ENCODE measurements at regions of chr2 and their contacts with region 1.

Region 1: GRCh38 chr2:190328573-190329147 is 9.0 kb upstream of the HIBCH start:
- DNase-seq: peak; percentile 40
- H3K4me3 ChIP-seq: no peak overlapping the region
- H3K27ac ChIP-seq: no peak overlapping the region
- H3K4me1 ChIP-seq: peaks cover 8% of the 10 kb centered on the region
- H3K27me3 ChIP-seq: no peaks in the 10 kb centered on the region
- CTCF ChIP-seq: peak in 1 of 2 donors; percentile 7
- POLR2A ChIP-seq: no peak

Region 2: DNA sequence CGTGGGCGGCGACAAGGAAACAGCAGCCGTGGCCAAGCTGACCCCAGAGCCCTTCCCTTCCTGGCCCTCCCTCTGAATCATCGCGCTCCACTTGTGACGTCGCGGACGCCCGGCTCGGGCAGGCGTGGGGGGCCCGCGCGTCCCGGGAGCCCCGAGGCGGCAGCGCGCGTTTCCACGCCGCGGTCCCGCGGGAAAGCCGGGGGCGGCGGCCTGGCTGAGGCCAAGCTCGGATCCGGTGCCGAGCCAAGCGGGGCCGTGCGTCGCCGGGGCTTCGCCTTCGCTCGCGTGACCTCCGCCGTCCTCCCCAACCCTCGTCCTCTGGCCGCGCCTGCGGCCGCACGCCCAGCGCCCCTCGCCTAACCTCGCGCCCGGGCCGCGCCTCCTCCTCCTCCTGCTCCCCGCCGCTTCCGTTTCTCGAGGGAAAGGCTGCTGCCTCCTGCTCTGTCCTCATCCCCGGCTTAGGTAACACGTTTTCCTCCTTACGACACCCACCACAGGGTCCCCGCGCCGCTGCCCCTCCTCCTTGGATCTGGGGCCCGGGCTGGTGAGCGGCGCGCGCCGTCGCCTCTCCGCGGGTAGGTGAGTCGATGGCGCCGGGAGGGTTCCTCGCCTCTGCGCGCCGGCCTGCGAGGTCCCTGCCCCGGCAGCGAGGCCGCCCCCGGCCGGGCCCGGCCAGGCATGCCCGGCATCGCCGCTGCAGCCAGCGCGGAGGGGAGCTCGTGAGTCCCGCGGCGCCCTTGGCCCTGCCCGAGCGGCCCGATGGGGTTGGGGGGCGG is 15.0 kb after region 1 on chr2 and contains the start of gene INPP1:
- CTCF ChIA-PET with region 1: interaction called, 27 read pairs
- POLR2A ChIA-PET with region 1: no interaction called
- dilution Hi-C with region 1: no loop called
- intact Hi-C with region 1: no loop called
- DNase-seq: peak; percentile 79
- H3K4me3 ChIP-seq: peak within 1 kb of the TSS; percentile 58 to 90 (median 67)
- H3K27ac ChIP-seq: peak within 1 kb of the TSS; percentile 73
- H3K4me1 ChIP-seq: peaks cover 14% of the 10 kb centered on the region
- H3K27me3 ChIP-seq: no peaks in the 10 kb centered on the region
- CTCF ChIP-seq: no peak
- POLR2A ChIP-seq: peak; percentile 63
- total RNA-seq, gene INPP1: 32.6 and 36.8 TPM in 2 replicates

Region 3: GRCh38 chr2:190360561-190360960 is 31.9 kb after region 1 on chr2:
- CTCF ChIA-PET with region 1: interaction called, 12 read pairs
- POLR2A ChIA-PET with region 1: no interaction called
- dilution Hi-C with region 1: no loop called
- intact Hi-C with region 1: no loop called
- DNase-seq: no peak
- H3K4me3 ChIP-seq: no peak overlapping the region
- H3K27ac ChIP-seq: no peak overlapping the region
- H3K4me1 ChIP-seq: peaks cover 5% of the 10 kb centered on the region
- H3K27me3 ChIP-seq: no peaks in the 10 kb centered on the region
- CTCF ChIP-seq: no peak
- POLR2A ChIP-seq: no peak

Region 4: GRCh38 chr2:190369635-190370034 is 41.0 kb after region 1 on chr2:
- CTCF ChIA-PET with region 1: interaction called, 19 read pairs
- POLR2A ChIA-PET with region 1: no interaction called
- dilution Hi-C with region 1: no loop called
- intact Hi-C with region 1: loop called (anchors 1 kb)
- DNase-seq: no peak
- H3K4me3 ChIP-seq: no peak overlapping the region
- H3K27ac ChIP-seq: no peak overlapping the region
- H3K4me1 ChIP-seq: no peaks in the 10 kb centered on the region
- H3K27me3 ChIP-seq: no peaks in the 10 kb centered on the region
- CTCF ChIP-seq: no peak
- POLR2A ChIP-seq: no peak

Region 5: GRCh38 chr2:190376591-190377245 is 48.1 kb after region 1 on chr2:
- CTCF ChIA-PET with region 1: interaction called, 19 read pairs
- POLR2A ChIA-PET with region 1: no interaction called
- dilution Hi-C with region 1: no loop called
- intact Hi-C with region 1: loop called (anchors 1 kb)
- DNase-seq: no peak
- H3K4me3 ChIP-seq: no peak overlapping the region
- H3K27ac ChIP-seq: no peak overlapping the region
- H3K4me1 ChIP-seq: no peaks in the 10 kb centered on the region
- H3K27me3 ChIP-seq: peaks cover 0 to 4% of the 10 kb centered on the region in 2 experiments
- CTCF ChIP-seq: no peak
- POLR2A ChIP-seq: no peak

Region 6: DNA sequence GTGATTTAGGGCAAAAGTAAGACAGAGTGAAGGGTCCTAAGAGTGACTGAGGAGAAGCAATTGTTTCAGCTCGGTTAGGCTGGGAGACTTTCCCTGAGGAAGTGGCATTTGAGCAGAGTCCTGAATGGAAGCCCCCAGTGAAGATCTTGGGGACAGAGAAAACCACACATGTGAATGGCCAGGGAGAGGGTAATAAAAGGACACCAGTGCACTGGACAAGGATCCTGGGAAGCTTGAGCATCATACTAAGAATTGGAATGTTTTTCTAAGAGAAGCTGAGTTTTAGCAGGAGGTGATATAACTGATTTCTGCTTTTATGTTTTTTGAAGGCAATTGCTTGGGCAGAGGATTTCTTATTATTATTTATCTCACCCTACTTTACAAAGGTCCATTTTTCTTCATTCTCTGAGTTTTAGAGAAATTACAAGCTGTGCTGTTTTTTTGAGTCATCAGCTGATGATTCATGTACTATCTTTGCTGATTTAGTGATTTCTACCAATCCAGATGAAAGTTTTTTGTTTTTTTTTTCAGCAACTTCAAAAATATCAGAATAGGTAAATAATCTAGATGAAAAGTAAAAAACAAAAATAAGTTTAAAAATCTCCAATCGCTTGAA is 123.0 kb after region 1 on chr2:
- CTCF ChIA-PET with region 1: no interaction called
- POLR2A ChIA-PET with region 1: no interaction called
- dilution Hi-C with region 1: no loop called
- intact Hi-C with region 1: no loop called
- DNase-seq: no peak
- H3K4me3 ChIP-seq: no peak overlapping the region
- H3K27ac ChIP-seq: no peak overlapping the region
- H3K4me1 ChIP-seq: no peaks in the 10 kb centered on the region
- H3K27me3 ChIP-seq: no peaks in the 10 kb centered on the region
- CTCF ChIP-seq: no peak
- POLR2A ChIP-seq: no peak

Region 7: DNA sequence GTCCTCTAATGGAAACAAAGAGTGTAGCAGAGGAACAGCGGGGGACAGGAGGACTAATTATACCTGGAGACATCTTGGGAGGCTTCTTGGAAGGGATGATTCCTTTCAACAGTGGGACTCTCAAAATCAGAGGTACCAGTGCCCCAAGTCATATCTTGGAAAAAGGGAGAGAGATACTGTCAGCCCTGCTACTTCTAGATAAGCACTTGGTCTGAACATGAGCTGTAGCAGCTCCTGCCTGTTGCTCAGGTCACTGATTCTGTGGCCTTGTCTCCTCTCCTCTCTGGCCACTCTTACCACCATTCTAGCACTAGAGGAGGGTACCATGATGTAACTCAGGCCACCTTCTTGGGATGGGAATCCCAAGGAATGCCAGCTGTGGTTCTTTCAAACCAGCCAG is 134.0 kb after region 1 on chr2:
- CTCF ChIA-PET with region 1: no interaction called
- POLR2A ChIA-PET with region 1: no interaction called
- dilution Hi-C with region 1: no loop called
- intact Hi-C with region 1: no loop called
- DNase-seq: no peak
- H3K4me3 ChIP-seq: no peak overlapping the region
- H3K27ac ChIP-seq: no peak overlapping the region
- H3K4me1 ChIP-seq: no peaks in the 10 kb centered on the region
- H3K27me3 ChIP-seq: no peaks in the 10 kb centered on the region
- CTCF ChIP-seq: no peak
- POLR2A ChIP-seq: no peak

Region 8: DNA sequence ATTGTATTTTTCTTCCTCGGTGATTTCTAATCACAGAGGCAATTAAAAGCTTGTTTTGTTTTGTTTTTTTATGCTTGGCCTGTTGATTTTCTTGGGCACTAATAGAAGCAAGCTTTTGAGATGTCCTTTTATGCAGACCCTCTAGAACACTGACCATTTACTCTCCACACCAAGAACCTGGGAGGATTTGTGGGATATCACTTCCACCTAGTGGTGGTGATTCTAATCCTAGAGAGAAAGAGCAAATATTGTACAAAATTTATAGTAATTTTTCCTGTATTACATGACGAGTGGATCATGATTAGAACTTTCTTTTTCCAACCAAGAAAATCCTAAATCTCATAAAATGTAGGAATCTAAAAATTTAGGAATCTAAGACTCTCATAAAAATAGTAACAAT is 182.4 kb after region 1 on chr2:
- CTCF ChIA-PET with region 1: interaction called, 24 read pairs
- POLR2A ChIA-PET with region 1: no interaction called
- dilution Hi-C with region 1: no loop called
- intact Hi-C with region 1: loop called (anchors 2 kb)
- DNase-seq: peak; percentile 65
- H3K4me3 ChIP-seq: no peak overlapping the region
- H3K27ac ChIP-seq: no peak overlapping the region
- H3K4me1 ChIP-seq: no peaks in the 10 kb centered on the region
- H3K27me3 ChIP-seq: no peaks in the 10 kb centered on the region
- CTCF ChIP-seq: peak; percentile 20 to 30
- POLR2A ChIP-seq: no peak